ENCODE measurements at regions of chr4 and their contacts with region 1.

Region 1: GRCh38 chr4:140153718-140154571 is at the start of gene MAML3:
- DNase-seq: peak; percentile 82
- ATAC-seq: peak; percentile 18
- H3K4me3 ChIP-seq: peak within 1 kb of the TSS; percentile 54 to 88 (median 79)
- H3K4me3 Mint-ChIP-seq: peak within 1 kb of the TSS; percentile 91
- H3K27ac ChIP-seq: no peak within 1 kb of the TSS
- H3K27ac Mint-ChIP-seq: peak within 1 kb of the TSS; percentile 82
- H3K4me1 ChIP-seq: peaks cover 48 to 68% of the 10 kb centered on the region in 2 donors
- H3K4me1 Mint-ChIP-seq: peaks cover 58% of the 10 kb centered on the region
- H3K27me3 ChIP-seq: peaks cover 0 to 72% (median 28%) of the 10 kb centered on the region in 4 experiments
- H3K27me3 Mint-ChIP-seq: peaks cover 53% of the 10 kb centered on the region
- CTCF ChIP-seq: no peak
- total RNA-seq, gene MAML3: 5.3 and 6.1 TPM in 2 replicates

Region 2: GRCh38 chr4:139301113-139301820 is 852.7 kb before region 1 on chr4 and contains the start of gene NAA15:
- CTCF ChIA-PET with region 1: no interaction called
- POLR2A ChIA-PET with region 1: no interaction called
- intact Hi-C with region 1: loop called (anchors 2 kb)
- DNase-seq: peak; percentile 98
- ATAC-seq: peak; percentile 89
- H3K4me3 ChIP-seq: peak within 1 kb of the TSS; percentile 75 to 98 (median 94)
- H3K4me3 Mint-ChIP-seq: peak within 1 kb of the TSS; percentile 99
- H3K27ac ChIP-seq: peak within 1 kb of the TSS; percentile 91 to 96
- H3K27ac Mint-ChIP-seq: peak within 1 kb of the TSS; percentile 99
- H3K4me1 ChIP-seq: peaks cover 22 to 23% of the 10 kb centered on the region in 2 donors
- H3K4me1 Mint-ChIP-seq: peaks cover 45% of the 10 kb centered on the region
- H3K27me3 ChIP-seq: no peaks in the 10 kb centered on the region
- H3K27me3 Mint-ChIP-seq: no peaks in the 10 kb centered on the region
- CTCF ChIP-seq: no peak
- total RNA-seq, gene NAA15: 56.7 and 59.5 TPM in 2 replicates

Region 3: GRCh38 chr4:140012688-140013486 is 141.1 kb before region 1 on chr4:
- CTCF ChIA-PET with region 1: interaction called, 3 read pairs
- POLR2A ChIA-PET with region 1: no interaction called
- intact Hi-C with region 1: loop called (anchors 5 kb)
- DNase-seq: peak; percentile 75
- ATAC-seq: peak; percentile 87
- H3K4me3 ChIP-seq: no peak overlapping the region
- H3K4me3 Mint-ChIP-seq: no peak overlapping the region
- H3K27ac ChIP-seq: no peak overlapping the region
- H3K27ac Mint-ChIP-seq: no peak overlapping the region
- H3K4me1 ChIP-seq: peaks cover 0 to 5% of the 10 kb centered on the region in 2 donors
- H3K4me1 Mint-ChIP-seq: peaks cover 7% of the 10 kb centered on the region
- H3K27me3 ChIP-seq: peaks cover 0 to 4% (median 2%) of the 10 kb centered on the region in 4 experiments
- H3K27me3 Mint-ChIP-seq: peaks cover 15% of the 10 kb centered on the region
- CTCF ChIP-seq: peak; percentile 77

Region 4: GRCh38 chr4:140123666-140124377 is 30.1 kb before region 1 on chr4:
- CTCF ChIA-PET with region 1: no interaction called
- POLR2A ChIA-PET with region 1: no interaction called
- intact Hi-C with region 1: no loop called
- DNase-seq: no peak
- ATAC-seq: no peak
- H3K4me3 ChIP-seq: no peak overlapping the region
- H3K4me3 Mint-ChIP-seq: no peak overlapping the region
- H3K27ac ChIP-seq: no peak overlapping the region
- H3K27ac Mint-ChIP-seq: no peak overlapping the region
- H3K4me1 ChIP-seq: peaks cover 3 to 7% of the 10 kb centered on the region in 2 donors
- H3K4me1 Mint-ChIP-seq: peaks cover 3% of the 10 kb centered on the region
- H3K27me3 ChIP-seq: no peaks in the 10 kb centered on the region
- H3K27me3 Mint-ChIP-seq: peaks cover 28% of the 10 kb centered on the region
- CTCF ChIP-seq: no peak

Region 5: DNA sequence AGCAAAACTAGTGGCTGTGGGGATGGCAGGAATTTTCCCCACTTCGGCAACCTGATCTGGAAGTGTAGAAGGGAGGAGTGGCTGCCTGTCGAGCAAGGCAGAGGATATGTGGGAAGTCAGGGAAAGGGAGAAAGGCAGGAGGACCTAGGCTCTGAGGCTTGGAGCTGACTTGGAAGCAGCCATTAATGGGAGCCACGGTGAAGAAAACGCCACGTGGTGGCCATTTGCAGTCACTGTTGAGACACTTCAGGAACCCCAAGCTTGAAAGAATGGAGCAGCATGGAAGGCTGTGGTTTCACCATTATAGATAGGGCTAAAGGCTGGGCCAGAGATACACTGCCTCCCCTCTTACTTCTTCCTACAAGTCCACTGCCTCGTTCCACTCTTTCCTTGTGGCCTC is 41.9 kb after region 1 on chr4:
- CTCF ChIA-PET with region 1: no interaction called
- POLR2A ChIA-PET with region 1: no interaction called
- intact Hi-C with region 1: no loop called
- DNase-seq: no peak
- ATAC-seq: no peak
- H3K4me3 ChIP-seq: no peak overlapping the region
- H3K4me3 Mint-ChIP-seq: no peak overlapping the region
- H3K27ac ChIP-seq: no peak overlapping the region
- H3K27ac Mint-ChIP-seq: no peak overlapping the region
- H3K4me1 ChIP-seq: peaks cover 0 to 5% of the 10 kb centered on the region in 2 donors
- H3K4me1 Mint-ChIP-seq: peaks cover 4% of the 10 kb centered on the region
- H3K27me3 ChIP-seq: peaks cover 0 to 4% (median 0%) of the 10 kb centered on the region in 4 experiments
- H3K27me3 Mint-ChIP-seq: peaks cover 14% of the 10 kb centered on the region
- CTCF ChIP-seq: no peak

Region 6: DNA sequence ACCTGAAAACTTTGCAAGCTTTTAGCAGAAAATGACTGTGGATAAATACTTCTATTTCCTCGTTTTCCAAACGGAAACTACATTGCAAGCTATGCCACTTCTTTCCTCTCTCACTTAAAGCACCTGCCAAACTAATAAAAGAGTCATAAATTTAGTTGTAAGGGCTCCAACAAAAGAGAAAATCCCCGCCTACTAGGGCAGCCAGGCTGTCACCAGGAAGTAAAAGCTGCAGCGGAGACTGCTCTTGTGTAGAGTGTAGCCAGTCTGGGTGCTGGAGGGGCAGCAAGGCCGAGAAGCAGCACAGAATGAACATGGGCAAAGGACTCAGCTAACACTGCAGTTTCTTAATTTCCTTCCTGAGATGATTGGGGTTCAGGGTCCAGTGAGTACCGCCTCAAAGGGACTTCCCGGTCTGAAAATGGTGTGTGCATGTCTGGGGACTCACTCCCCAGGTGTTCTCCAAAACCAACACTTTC is 89.4 kb after region 1 on chr4:
- CTCF ChIA-PET with region 1: interaction called, 3 read pairs
- POLR2A ChIA-PET with region 1: interaction called, 8 read pairs
- intact Hi-C with region 1: loop called (anchors 2 kb)
- DNase-seq: peak; percentile 74
- ATAC-seq: peak; percentile 92
- H3K4me3 ChIP-seq: peak overlapping the region in 4 of 5 experiments; percentile 4 to 51 (median 22)
- H3K4me3 Mint-ChIP-seq: peak overlapping the region; percentile 66
- H3K27ac ChIP-seq: peak overlapping the region; percentile 42 to 61
- H3K27ac Mint-ChIP-seq: peak overlapping the region; percentile 62
- H3K4me1 ChIP-seq: peaks cover 36 to 38% of the 10 kb centered on the region in 2 donors
- H3K4me1 Mint-ChIP-seq: peaks cover 53% of the 10 kb centered on the region
- H3K27me3 ChIP-seq: peaks cover 0 to 4% (median 0%) of the 10 kb centered on the region in 4 experiments
- H3K27me3 Mint-ChIP-seq: peaks cover 4% of the 10 kb centered on the region
- CTCF ChIP-seq: no peak

Region 7: GRCh38 chr4:140523857-140524742 is 370.2 kb after region 1 on chr4 and contains the start of gene ELMOD2:
- CTCF ChIA-PET with region 1: no interaction called
- POLR2A ChIA-PET with region 1: no interaction called
- intact Hi-C with region 1: loop called (anchors 10 kb)
- DNase-seq: peak; percentile 98
- ATAC-seq: peak; percentile 99
- H3K4me3 ChIP-seq: peak within 1 kb of the TSS; percentile 65 to 89 (median 78)
- H3K4me3 Mint-ChIP-seq: peak within 1 kb of the TSS; percentile 91
- H3K27ac ChIP-seq: peak within 1 kb of the TSS; percentile 59 to 71
- H3K27ac Mint-ChIP-seq: peak within 1 kb of the TSS; percentile 86
- H3K4me1 ChIP-seq: peaks cover 12 to 13% of the 10 kb centered on the region in 2 donors
- H3K4me1 Mint-ChIP-seq: peaks cover 16% of the 10 kb centered on the region
- H3K27me3 ChIP-seq: no peaks in the 10 kb centered on the region
- H3K27me3 Mint-ChIP-seq: no peaks in the 10 kb centered on the region
- CTCF ChIP-seq: peak; percentile 92
- total RNA-seq, gene ELMOD2: 23.4 and 25.3 TPM in 2 replicates